AG04450 (cell line): ENCODE measurements at regions of chr2 and their contacts with region 1.

Region 1: GRCh38 chr2:1769703-1770422 is 25.5 kb upstream of the PXDN start:
- DNase-seq: no peak
- H3K4me3 ChIP-seq: no peak overlapping the region
- H3K27ac ChIP-seq: no peak overlapping the region
- H3K27me3 ChIP-seq: peaks cover 12% of the 10 kb centered on the region
- CTCF ChIP-seq: peak; percentile 85

Region 2: GRCh38 chr2:1758774-1759610 is 10.9 kb before region 1 on chr2:
- CTCF ChIA-PET with region 1: interaction called, 18 read pairs
- POLR2A ChIA-PET with region 1: no interaction called
- DNase-seq: no peak
- H3K4me3 ChIP-seq: no peak overlapping the region
- H3K27ac ChIP-seq: peak overlapping the region; percentile 24
- H3K27me3 ChIP-seq: no peaks in the 10 kb centered on the region
- CTCF ChIP-seq: no peak